Right ventricle myocardium inferior (tissue), 1 donor: ENCODE measurements at regions of chr3 and their contacts with region 1.

Region 1: DNA sequence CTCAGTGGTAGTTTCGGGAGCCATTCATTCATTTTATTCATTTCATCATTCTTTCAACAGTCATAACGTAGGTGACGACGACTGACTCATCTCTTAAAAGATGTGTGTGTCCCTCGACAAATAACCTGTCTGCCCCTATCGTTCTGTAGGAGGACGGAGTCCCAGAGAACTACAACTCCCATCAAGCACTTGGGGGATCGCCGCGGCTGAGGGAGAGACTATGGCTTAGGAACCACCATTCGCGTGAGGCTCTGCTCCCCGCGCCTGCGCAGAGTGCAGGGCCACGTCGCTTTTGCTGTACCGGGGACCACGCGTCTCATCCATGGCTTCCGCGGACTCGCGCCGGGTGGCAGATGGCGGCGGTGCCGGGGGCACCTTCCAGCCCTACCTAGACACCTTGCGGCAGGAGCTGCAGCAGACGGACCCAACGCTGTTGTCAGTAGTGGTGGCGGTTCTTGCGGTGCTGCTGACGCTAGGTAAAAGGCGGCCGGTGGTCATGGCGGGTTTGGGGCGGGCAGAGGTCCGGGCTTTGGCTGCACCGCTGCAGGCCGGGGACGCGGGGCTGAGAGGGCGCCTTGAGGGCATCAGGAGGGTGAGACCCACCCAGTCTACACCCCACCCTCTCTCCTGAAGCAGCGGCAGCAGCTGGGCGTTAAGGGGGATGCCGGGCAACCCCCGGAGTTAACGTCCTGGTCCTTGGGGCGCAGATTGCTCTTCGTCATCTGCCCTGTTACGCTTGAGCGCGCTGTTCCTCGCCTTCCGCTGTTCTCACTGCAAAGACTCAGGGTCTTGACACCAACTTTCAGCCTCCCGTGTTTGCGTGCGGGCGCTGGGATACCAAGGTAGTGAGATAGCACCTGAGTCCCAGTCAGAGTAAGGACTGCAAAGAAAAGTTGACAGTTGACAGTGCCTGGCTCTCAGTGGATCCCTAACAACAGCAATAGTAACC is at the start of gene SRPRB:
- DNase-seq: peak; percentile 97
- ATAC-seq: peak; percentile 100
- total RNA-seq, gene SRPRB: 27.2 TPM

Region 2: GRCh38 chr3:133633439-133633838 is 172.4 kb before region 1 on chr3:
- intact Hi-C with region 1: no loop called
- DNase-seq: no peak
- ATAC-seq: no peak

Region 3: DNA sequence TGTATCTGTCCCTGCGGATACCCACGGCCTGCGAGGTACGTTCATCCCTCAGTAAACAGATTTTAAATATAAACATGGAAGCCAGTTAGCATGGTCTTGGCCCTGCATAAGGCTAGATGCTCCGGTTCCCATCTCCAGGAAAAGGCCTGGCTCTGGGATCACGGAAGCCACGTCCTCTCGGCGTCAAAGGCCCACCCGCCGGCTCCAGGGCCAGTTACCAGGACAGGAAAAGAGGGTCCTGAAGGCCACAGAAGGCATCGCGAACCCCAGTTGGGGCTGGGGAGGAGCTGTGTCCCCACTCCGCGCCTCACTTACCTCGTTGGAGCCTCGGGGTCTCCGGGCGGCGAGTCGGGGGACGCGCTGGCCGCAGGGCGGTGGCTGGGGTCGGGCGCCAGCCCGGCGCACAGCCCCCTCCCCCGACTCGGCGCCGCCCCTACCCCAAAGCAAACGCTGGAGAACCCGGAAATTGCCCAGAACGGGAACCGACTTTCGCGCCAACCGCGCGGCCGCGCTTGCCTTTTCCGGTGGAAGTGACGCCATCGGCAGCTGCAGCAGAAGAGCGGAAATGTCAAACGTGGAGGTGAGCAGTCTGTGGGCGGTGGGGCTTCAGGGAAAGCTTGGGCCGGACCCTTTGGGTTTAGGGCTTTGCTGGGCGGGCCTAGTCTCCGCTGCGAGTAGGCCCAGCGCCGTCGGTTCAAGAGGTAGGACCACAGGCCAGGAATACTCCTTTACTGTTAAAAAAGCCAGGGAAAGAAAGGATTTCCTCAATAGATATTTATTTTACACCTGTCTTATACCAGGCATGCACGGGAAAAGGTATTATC is 144.1 kb before region 1 on chr3 and contains the start of gene TOPBP1:
- intact Hi-C with region 1: loop called (anchors 5 kb)
- DNase-seq: peak; percentile 93
- ATAC-seq: peak; percentile 86
- total RNA-seq, gene TOPBP1: 10.5 TPM

Region 4: DNA sequence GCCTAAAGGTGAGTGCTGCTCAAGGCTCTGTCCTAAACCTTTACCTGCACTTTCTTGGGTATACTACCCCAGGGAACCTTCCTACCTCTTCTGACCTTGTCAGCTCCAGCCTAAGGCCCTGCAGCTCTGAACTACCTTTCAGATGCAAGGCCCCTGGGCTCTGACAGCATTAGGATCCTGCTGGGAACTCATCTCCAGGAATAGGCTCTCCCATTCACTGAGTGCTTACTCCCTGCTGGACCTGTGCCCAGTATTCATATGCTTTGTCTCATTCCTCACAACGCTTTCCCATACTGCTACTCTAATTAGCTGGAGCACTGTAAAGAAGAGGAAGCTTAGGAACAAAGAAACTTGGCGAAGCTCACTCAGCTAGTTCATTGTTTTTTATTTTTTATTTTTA is 143.6 kb after region 1 on chr3:
- intact Hi-C with region 1: no loop called
- DNase-seq: no peak
- ATAC-seq: no peak